ENCODE measurements at regions of chr20 and their contacts with region 1.

Region 1: DNA sequence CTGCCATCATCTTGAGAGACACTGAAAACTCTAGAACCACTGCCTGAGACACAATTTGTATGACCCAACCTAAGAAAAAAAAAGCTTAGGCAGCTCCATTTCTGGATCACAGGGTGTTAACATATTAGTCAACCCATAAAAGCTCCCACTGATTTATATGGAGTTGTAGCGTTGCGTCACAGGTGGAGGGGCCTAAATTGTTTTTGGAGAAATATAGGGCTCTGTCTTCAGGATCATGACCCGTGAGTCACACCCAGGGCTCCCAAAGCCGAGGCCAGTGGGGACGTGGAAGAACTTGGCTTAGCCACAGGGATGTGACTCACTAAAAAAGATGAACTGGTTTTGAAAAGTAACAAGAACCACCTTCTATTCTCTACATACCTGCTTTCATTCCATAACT is 116.5 kb upstream of the BMP2 start:
- DNase-seq: no peak
- H3K4me3 ChIP-seq: no peak overlapping the region
- CTCF ChIP-seq: no peak

Region 2: GRCh38 chr20:6708010-6708409 is 57.0 kb after region 1 on chr20:
- in situ Hi-C with region 1: loop called (anchors 5 kb)
- DNase-seq: peak; percentile 67
- H3K4me3 ChIP-seq: no peak overlapping the region
- CTCF ChIP-seq: no peak